ENCODE measurements at regions of chr2 and their contacts with region 1.

Region 1: DNA sequence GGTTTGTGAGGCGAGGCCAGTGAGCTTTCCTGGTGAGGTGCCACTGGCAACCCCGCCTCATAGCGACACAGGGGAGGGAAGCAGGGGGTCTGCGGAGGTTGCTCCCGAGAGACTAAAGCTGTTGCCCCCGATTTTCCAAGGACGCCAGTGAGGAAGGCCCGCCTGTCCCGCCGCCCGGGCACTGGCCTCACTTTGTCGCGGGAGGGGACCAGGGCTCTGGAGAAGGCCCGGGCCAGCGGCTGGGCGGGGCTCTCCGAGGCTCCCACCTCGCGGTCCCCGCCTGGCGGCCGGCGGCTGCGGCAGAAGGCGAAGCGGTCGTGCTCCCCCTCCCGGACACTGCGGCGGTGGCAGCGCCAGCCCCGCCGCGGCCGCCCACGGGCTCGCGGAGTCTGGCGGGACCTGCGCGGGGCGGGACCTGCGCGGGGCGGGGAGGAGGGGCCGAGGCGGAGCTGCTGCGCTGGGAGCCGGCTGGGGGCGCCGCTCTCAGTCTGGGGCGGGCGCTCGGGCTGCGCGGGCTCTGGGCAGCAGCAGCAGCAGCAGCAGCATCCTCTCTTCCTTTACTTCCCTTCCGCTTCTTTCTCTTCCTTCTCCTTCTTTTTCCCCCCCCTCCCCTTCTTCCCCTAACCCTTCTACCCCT is at the start of gene MAP2:
- DNase-seq: peak; percentile 79
- H3K4me3 ChIP-seq: peak within 1 kb of the TSS; percentile 58 to 91 (median 91)
- H3K27ac ChIP-seq: peak within 1 kb of the TSS; percentile 68
- H3K4me1 ChIP-seq: peaks cover 20% of the 10 kb centered on the region
- H3K27me3 ChIP-seq: no peaks in the 10 kb centered on the region
- CTCF ChIP-seq: peak; percentile 57 to 77
- total RNA-seq, gene MAP2: 10.5 to 31.5 TPM

Region 2: DNA sequence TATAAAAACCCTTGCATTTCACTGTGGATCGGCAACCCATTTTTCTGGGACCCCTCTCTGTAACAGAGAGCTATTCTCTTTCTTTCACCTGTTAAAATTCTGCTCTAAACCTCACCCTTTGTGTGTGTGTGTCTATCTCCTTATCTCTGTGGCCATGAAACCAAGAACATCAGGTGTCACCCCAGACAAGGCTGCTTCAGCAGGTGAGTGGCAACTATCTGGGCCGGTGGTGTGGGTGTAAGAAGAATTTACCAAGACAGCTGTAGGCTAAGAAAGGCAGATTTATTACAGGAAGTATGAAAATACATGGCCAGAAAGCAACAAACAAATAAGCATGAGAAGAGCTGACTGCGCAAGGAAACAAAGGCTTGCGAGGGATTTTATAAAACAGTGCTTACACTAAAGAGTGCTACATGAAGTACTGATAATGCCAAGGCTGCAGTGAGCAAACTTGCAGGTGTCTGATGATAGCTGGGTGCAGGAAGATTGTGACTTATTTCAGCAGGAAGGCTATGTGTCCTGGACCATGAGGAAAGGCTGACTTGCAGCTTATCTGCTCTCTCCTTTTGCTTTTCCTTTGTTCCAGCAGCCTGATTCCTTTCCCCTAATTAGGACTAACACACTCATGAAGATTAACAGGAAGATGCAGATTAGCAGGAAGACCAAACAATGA is 596.0 kb before region 1 on chr2:
- CTCF ChIA-PET with region 1: no interaction called
- dilution Hi-C with region 1: no loop called
- in situ Hi-C with region 1: no loop called
- intact Hi-C with region 1: no loop called
- DNase-seq: no peak
- H3K4me3 ChIP-seq: no peak overlapping the region
- H3K27ac ChIP-seq: no peak overlapping the region
- H3K4me1 ChIP-seq: no peaks in the 10 kb centered on the region
- H3K27me3 ChIP-seq: no peaks in the 10 kb centered on the region
- CTCF ChIP-seq: no peak

Region 3: GRCh38 chr2:209334198-209335017 is 89.3 kb before region 1 on chr2:
- CTCF ChIA-PET with region 1: interaction called, 18 read pairs
- dilution Hi-C with region 1: no loop called
- in situ Hi-C with region 1: loop called in 1 of 2 experiments (anchors 10 kb)
- intact Hi-C with region 1: loop called (anchors 1 kb)
- DNase-seq: peak; percentile 41
- H3K4me3 ChIP-seq: no peak overlapping the region
- H3K27ac ChIP-seq: no peak overlapping the region
- H3K4me1 ChIP-seq: peaks cover 4% of the 10 kb centered on the region
- H3K27me3 ChIP-seq: no peaks in the 10 kb centered on the region
- CTCF ChIP-seq: peak; percentile 87 to 96

Region 4: GRCh38 chr2:209458008-209458979 is 34.6 kb after region 1 on chr2:
- CTCF ChIA-PET with region 1: interaction called, 42 read pairs
- dilution Hi-C with region 1: no loop called
- in situ Hi-C with region 1: no loop called
- intact Hi-C with region 1: no loop called
- DNase-seq: no peak
- H3K4me3 ChIP-seq: no peak overlapping the region
- H3K27ac ChIP-seq: no peak overlapping the region
- H3K4me1 ChIP-seq: no peaks in the 10 kb centered on the region
- H3K27me3 ChIP-seq: no peaks in the 10 kb centered on the region
- CTCF ChIP-seq: no peak

Region 5: GRCh38 chr2:209495855-209496585 is 72.3 kb after region 1 on chr2:
- CTCF ChIA-PET with region 1: no interaction called
- dilution Hi-C with region 1: no loop called
- in situ Hi-C with region 1: no loop called
- intact Hi-C with region 1: loop called (anchors 2 kb)
- DNase-seq: peak; percentile 95
- H3K4me3 ChIP-seq: peak overlapping the region in 1 of 3 experiments; percentile 10
- H3K27ac ChIP-seq: peak overlapping the region; percentile 80
- H3K4me1 ChIP-seq: peaks cover 19% of the 10 kb centered on the region
- H3K27me3 ChIP-seq: no peaks in the 10 kb centered on the region
- CTCF ChIP-seq: no peak

Region 6: GRCh38 chr2:209577376-209578357 is 154.0 kb after region 1 on chr2:
- CTCF ChIA-PET with region 1: interaction called, 3 read pairs
- dilution Hi-C with region 1: no loop called
- in situ Hi-C with region 1: no loop called
- intact Hi-C with region 1: loop called (anchors 1 kb)
- DNase-seq: no peak
- H3K4me3 ChIP-seq: no peak overlapping the region
- H3K27ac ChIP-seq: no peak overlapping the region
- H3K4me1 ChIP-seq: no peaks in the 10 kb centered on the region
- H3K27me3 ChIP-seq: no peaks in the 10 kb centered on the region
- CTCF ChIP-seq: peak; percentile 32 to 41

Region 7: GRCh38 chr2:209762563-209762962 is 338.9 kb after region 1 on chr2:
- CTCF ChIA-PET with region 1: no interaction called
- dilution Hi-C with region 1: no loop called
- in situ Hi-C with region 1: no loop called
- intact Hi-C with region 1: loop called (anchors 10 kb)
- DNase-seq: peak; percentile 19
- H3K4me3 ChIP-seq: no peak overlapping the region
- H3K27ac ChIP-seq: no peak overlapping the region
- H3K4me1 ChIP-seq: no peaks in the 10 kb centered on the region
- H3K27me3 ChIP-seq: no peaks in the 10 kb centered on the region
- CTCF ChIP-seq: no peak

Region 8: GRCh38 chr2:210195101-210195852 is 771.6 kb after region 1 on chr2:
- CTCF ChIA-PET with region 1: no interaction called
- dilution Hi-C with region 1: no loop called
- in situ Hi-C with region 1: no loop called
- intact Hi-C with region 1: loop called (anchors 10 kb)
- DNase-seq: no peak
- H3K4me3 ChIP-seq: no peak overlapping the region
- H3K27ac ChIP-seq: no peak overlapping the region
- H3K4me1 ChIP-seq: no peaks in the 10 kb centered on the region
- H3K27me3 ChIP-seq: no peaks in the 10 kb centered on the region
- CTCF ChIP-seq: peak; percentile 66 to 71